ENCODE measurements at regions of chr10 and their contacts with region 1.

Region 1: GRCh38 chr10:52451817-52452216 is 137.7 kb downstream of the DKK1 start:
- DNase-seq: peak; percentile 76
- ATAC-seq: peak; percentile 71
- H3K4me3 ChIP-seq: no peak overlapping the region
- H3K27ac ChIP-seq: no peak overlapping the region
- H3K4me1 ChIP-seq: peaks cover 20% of the 10 kb centered on the region
- H3K27me3 ChIP-seq: no peaks in the 10 kb centered on the region
- CTCF ChIP-seq: no peak
- POLR2A ChIP-seq: no peak
- RAD21 ChIP-seq: no peak

Region 2: DNA sequence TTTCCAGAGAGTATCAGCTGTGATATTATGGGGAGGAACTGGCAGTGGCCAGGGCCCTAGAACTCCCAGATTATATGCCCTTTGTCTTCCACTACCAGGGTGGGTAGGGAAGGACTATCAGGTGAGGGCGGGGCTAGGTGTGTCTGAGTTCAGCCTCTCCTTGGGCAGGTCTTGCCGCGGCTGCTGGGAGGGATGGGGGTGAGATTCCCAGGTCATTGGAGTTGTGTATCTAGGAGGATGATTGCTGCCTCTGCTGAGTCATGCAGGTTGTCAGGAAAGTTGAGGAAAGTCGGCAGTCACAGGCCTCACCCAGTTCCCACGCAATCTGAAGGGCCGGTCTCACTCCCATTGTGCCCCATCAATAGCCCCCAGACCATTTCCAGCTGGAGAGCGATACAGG is 47.5 kb after region 1 on chr10:
- CTCF ChIA-PET with region 1: no interaction called
- POLR2A ChIA-PET with region 1: no interaction called
- dilution Hi-C with region 1: no loop called
- in situ Hi-C with region 1: no loop called
- intact Hi-C with region 1: loop called (anchors 1 kb)
- DNase-seq: no peak
- ATAC-seq: no peak
- H3K4me3 ChIP-seq: no peak overlapping the region
- H3K27ac ChIP-seq: no peak overlapping the region
- H3K4me1 ChIP-seq: no peaks in the 10 kb centered on the region
- H3K27me3 ChIP-seq: no peaks in the 10 kb centered on the region
- CTCF ChIP-seq: no peak
- POLR2A ChIP-seq: no peak
- RAD21 ChIP-seq: no peak